ENCODE measurements at regions of chr18 and their contacts with region 1.

Region 1: GRCh38 chr18:74342416-74343043 is 26.9 kb downstream of the C18orf63 start:
- DNase-seq: peak; percentile 72
- ATAC-seq: no peak
- H3K4me3 ChIP-seq: no peak overlapping the region
- H3K4me3 Mint-ChIP-seq: no peak overlapping the region
- H3K27ac ChIP-seq: no peak overlapping the region
- H3K27ac Mint-ChIP-seq: peak overlapping the region; percentile 64
- H3K4me1 ChIP-seq: peaks cover 0 to 8% of the 10 kb centered on the region in 2 donors
- H3K4me1 Mint-ChIP-seq: peaks cover 22% of the 10 kb centered on the region
- H3K27me3 ChIP-seq: no peaks in the 10 kb centered on the region
- H3K27me3 Mint-ChIP-seq: no peaks in the 10 kb centered on the region
- CTCF ChIP-seq: peak; percentile 93

Region 2: GRCh38 chr18:74081966-74082741 is 260.4 kb before region 1 on chr18:
- CTCF ChIA-PET with region 1: interaction called, 16 read pairs
- POLR2A ChIA-PET with region 1: no interaction called
- intact Hi-C with region 1: loop called (anchors 1 kb)
- DNase-seq: peak; percentile 71
- ATAC-seq: peak; percentile 97
- H3K4me3 ChIP-seq: peak overlapping the region in 3 of 5 experiments; percentile 8 to 17 (median 11)
- H3K4me3 Mint-ChIP-seq: peak overlapping the region; percentile 69
- H3K27ac ChIP-seq: peak overlapping the region; percentile 65 to 68
- H3K27ac Mint-ChIP-seq: peak overlapping the region; percentile 93
- H3K4me1 ChIP-seq: peaks cover 15% of the 10 kb centered on the region in 2 donors
- H3K4me1 Mint-ChIP-seq: peaks cover 23% of the 10 kb centered on the region
- H3K27me3 ChIP-seq: no peaks in the 10 kb centered on the region
- H3K27me3 Mint-ChIP-seq: peaks cover 6% of the 10 kb centered on the region
- CTCF ChIP-seq: peak; percentile 27

Region 3: DNA sequence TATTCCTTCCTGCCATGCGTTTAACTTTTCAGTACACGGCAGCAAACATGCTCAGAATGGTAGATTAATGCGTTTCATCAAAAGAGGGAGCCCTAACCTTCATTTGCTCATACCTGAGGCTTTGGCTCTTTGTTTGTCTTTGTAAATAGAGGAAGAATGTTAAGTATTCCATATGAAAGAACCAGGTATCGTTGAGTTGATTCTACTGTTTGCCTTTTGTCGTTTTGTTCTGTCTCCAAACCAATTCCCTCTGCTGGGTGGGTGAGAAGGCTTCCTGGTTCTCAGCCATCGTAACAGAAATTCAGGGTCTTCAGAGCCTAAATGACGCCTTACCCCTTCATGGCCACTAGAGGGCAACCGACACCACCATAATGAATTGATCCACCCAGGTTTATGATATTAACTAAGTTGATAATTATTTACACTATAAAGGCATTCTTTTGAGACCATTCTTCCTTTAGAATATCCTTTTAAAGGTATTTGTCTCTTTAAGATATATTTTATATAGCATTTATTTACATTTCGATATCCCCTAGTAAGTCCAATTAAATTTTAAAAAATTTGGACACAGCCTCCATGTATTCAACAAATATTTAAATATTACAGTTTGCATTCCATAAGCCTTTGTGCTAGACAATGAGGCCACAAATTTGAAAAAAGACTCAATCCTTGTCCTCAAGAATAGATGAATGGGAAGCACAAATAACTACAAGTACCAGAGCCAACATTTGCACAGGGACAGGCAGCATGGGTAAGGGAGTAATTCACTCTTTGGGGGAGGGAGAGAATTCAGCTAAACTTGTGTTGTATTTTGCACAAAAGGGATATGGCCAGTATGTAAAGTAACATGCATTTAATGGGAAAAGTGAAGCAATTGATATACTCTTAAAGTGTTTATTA is 146.1 kb before region 1 on chr18:
- CTCF ChIA-PET with region 1: interaction called, 196 read pairs
- POLR2A ChIA-PET with region 1: no interaction called
- intact Hi-C with region 1: loop called (anchors 1 kb)
- DNase-seq: peak; percentile 86
- ATAC-seq: peak; percentile 92
- H3K4me3 ChIP-seq: peak overlapping the region; percentile 9 to 79 (median 45)
- H3K4me3 Mint-ChIP-seq: peak overlapping the region; percentile 82
- H3K27ac ChIP-seq: peak overlapping the region in 1 of 2 donors; percentile 71
- H3K27ac Mint-ChIP-seq: peak overlapping the region; percentile 84
- H3K4me1 ChIP-seq: peaks cover 0 to 11% of the 10 kb centered on the region in 2 donors
- H3K4me1 Mint-ChIP-seq: peaks cover 18% of the 10 kb centered on the region
- H3K27me3 ChIP-seq: no peaks in the 10 kb centered on the region
- H3K27me3 Mint-ChIP-seq: peaks cover 17% of the 10 kb centered on the region
- CTCF ChIP-seq: peak; percentile 95

Region 4: DNA sequence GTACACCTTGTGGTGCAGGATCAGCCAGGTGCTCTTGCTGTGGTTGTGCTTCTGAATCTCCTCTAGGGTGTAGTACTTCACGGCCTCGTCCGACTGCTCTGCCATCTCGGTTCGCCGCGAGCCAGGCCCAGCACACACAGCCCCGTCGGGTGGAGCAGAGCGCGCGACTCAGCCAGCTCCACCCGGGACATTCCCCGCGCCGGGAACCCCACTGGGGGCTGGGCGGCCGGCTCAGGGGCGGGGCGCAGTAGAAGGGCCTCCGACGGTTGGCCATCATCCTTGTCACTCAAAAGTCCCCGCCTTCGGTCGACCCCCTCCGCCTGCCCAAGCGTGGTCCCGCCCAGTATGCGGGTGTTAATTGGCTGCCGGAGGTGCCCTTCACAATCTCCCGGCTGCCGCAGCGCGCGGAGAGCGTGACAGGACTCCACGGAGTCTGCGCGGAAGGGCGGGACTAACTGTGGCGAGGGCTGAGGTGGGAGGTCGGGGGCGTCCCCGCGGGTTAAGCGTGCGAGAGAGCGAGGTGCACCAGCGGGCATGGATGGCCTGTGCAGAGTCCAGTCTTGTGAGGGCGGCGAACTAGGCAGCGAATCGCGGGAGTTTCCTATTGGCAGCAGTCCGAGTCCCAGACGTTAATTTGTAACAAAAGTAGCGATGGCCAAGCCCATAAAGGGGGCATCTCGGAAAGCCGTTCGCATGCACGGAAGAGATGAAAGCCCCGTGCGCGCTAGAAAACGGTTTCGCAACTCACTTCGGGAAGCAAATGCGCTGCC is 50.6 kb before region 1 on chr18 and contains the start of gene CYB5A:
- CTCF ChIA-PET with region 1: interaction called, 10 read pairs
- POLR2A ChIA-PET with region 1: no interaction called
- intact Hi-C with region 1: loop called (anchors 2 kb)
- DNase-seq: peak; percentile 99
- ATAC-seq: peak; percentile 96
- H3K4me3 ChIP-seq: peak within 1 kb of the TSS; percentile 66 to 97 (median 85)
- H3K4me3 Mint-ChIP-seq: no peak within 1 kb of the TSS
- H3K27ac ChIP-seq: peak within 1 kb of the TSS; percentile 56 to 66
- H3K27ac Mint-ChIP-seq: peak within 1 kb of the TSS; percentile 89
- H3K4me1 ChIP-seq: peaks cover 15 to 26% of the 10 kb centered on the region in 2 donors
- H3K4me1 Mint-ChIP-seq: peaks cover 41% of the 10 kb centered on the region
- H3K27me3 ChIP-seq: no peaks in the 10 kb centered on the region
- H3K27me3 Mint-ChIP-seq: no peaks in the 10 kb centered on the region
- CTCF ChIP-seq: peak; percentile 3
- total RNA-seq, gene CYB5A: 46.4 and 46.9 TPM in 2 replicates

Region 5: GRCh38 chr18:74353169-74353775 is 10.7 kb after region 1 on chr18:
- CTCF ChIA-PET with region 1: interaction called, 15 read pairs
- POLR2A ChIA-PET with region 1: no interaction called
- intact Hi-C with region 1: no loop called
- DNase-seq: peak; percentile 63
- ATAC-seq: peak; percentile 49
- H3K4me3 ChIP-seq: no peak overlapping the region
- H3K4me3 Mint-ChIP-seq: no peak overlapping the region
- H3K27ac ChIP-seq: no peak overlapping the region
- H3K27ac Mint-ChIP-seq: no peak overlapping the region
- H3K4me1 ChIP-seq: peaks cover 4 to 8% of the 10 kb centered on the region in 2 donors
- H3K4me1 Mint-ChIP-seq: peaks cover 11% of the 10 kb centered on the region
- H3K27me3 ChIP-seq: no peaks in the 10 kb centered on the region
- H3K27me3 Mint-ChIP-seq: no peaks in the 10 kb centered on the region
- CTCF ChIP-seq: peak; percentile 53

Region 6: GRCh38 chr18:74396171-74397169 is 53.9 kb after region 1 on chr18:
- CTCF ChIA-PET with region 1: no interaction called
- POLR2A ChIA-PET with region 1: no interaction called
- intact Hi-C with region 1: no loop called
- DNase-seq: no peak
- ATAC-seq: no peak
- H3K4me3 ChIP-seq: no peak overlapping the region
- H3K4me3 Mint-ChIP-seq: no peak overlapping the region
- H3K27ac ChIP-seq: no peak overlapping the region
- H3K27ac Mint-ChIP-seq: no peak overlapping the region
- H3K4me1 ChIP-seq: no peaks in the 10 kb centered on the region
- H3K4me1 Mint-ChIP-seq: peaks cover 3% of the 10 kb centered on the region
- H3K27me3 ChIP-seq: peaks cover 0 to 13% (median 2%) of the 10 kb centered on the region in 4 experiments
- H3K27me3 Mint-ChIP-seq: peaks cover 44% of the 10 kb centered on the region
- CTCF ChIP-seq: no peak